Panc1 (cell line): ENCODE measurements at regions of chr6 and their contacts with region 1.

Region 1: DNA sequence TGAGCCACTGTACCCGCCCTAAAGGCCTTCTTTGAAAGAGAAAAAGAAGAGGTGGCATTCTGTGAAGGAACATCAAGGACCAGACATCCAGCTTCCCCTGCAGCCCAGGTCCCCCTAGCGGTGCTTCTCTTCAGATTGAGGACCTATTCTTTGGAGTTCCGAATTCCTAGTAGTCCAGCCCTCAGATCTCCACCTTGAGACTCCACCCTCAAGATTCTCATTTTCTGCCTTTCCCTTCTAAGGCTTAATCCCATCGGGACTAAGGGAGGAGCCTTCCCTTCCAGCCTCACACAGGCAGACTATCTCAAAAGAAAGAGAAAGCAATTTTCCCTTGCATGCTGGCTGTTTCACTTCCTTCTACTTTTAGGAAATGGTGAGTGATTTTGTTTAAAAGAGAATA is 32.5 kb downstream of the MUC22 start:
- DNase-seq: peak; percentile 18
- ATAC-seq: peak; percentile 89
- H3K4me3 ChIP-seq: no peak overlapping the region
- H3K27ac ChIP-seq: no peak overlapping the region
- H3K4me1 ChIP-seq: peaks cover 4% of the 10 kb centered on the region
- H3K27me3 ChIP-seq: no peaks in the 10 kb centered on the region
- CTCF ChIP-seq: peak; percentile 84

Region 2: DNA sequence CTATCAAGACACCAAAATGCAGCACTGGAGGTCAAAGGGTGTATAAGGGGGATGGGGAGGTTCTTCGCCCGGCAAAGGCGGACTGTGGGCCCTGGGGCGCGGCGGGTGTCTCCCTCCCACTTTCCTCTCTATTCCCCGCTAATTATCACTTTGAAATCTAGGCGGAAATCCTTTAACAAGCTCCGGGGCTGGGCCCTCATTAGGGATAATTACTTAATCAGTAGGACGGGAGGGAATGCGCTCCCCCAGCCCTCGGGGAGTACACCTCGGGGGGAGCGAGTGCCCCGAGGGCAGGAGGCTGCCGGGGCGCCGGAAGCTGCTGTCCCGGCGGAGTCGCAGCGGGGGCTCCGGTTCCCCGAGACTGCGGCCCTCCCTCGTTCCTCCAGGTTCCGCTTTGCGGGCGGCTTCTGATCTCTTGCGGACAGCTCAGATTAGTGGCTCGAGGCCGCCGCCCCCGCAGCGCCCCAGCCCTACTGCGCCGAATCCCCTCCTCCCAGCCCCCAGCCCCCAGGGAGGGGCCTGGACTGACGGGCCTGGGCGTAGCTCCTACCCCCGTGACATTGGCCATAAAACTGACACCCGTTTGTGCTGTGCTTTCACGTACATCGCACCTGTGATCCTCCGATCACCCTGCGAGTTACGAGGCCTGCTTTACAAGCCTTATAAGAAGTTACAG is 87.3 kb before region 1 on chr6:
- CTCF ChIA-PET with region 1: no interaction called
- POLR2A ChIA-PET with region 1: no interaction called
- in situ Hi-C with region 1: loop called (anchors 5 kb)
- intact Hi-C with region 1: no loop called
- DNase-seq: no peak
- ATAC-seq: peak; percentile 84
- H3K4me3 ChIP-seq: peak overlapping the region; percentile 42 to 57
- H3K27ac ChIP-seq: no peak overlapping the region; the same call in 1 of the 2 replicates
- H3K4me1 ChIP-seq: peaks cover 8% of the 10 kb centered on the region; the same call in 1 of the 2 replicates
- H3K27me3 ChIP-seq: peaks cover 22% of the 10 kb centered on the region
- CTCF ChIP-seq: no peak

Region 3: DNA sequence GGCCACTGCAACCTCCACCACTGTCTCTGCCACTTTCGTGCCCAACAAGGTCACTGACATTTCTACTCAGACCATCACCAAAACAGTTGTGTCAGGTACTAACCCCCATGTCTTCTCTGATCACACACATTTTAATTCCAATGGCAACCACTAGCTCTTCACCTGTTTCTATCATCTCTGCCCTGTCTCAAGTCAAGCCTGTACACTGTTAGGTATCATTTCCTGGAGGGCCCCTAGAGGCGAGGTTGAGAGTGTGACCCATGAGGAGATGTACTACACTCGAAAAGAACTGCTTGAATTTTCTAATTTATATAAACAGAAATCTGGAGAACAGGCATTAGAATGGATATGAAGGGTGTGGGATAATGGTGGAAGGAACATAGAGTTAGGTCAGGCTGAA is 76.7 kb before region 1 on chr6:
- CTCF ChIA-PET with region 1: no interaction called
- POLR2A ChIA-PET with region 1: no interaction called
- in situ Hi-C with region 1: no loop called
- intact Hi-C with region 1: no loop called
- DNase-seq: no peak
- ATAC-seq: no peak
- H3K4me3 ChIP-seq: no peak overlapping the region
- H3K27ac ChIP-seq: no peak overlapping the region
- H3K4me1 ChIP-seq: no peaks in the 10 kb centered on the region
- H3K27me3 ChIP-seq: no peaks in the 10 kb centered on the region
- CTCF ChIP-seq: no peak